GM12878 (cell line): ENCODE measurements at regions of chr3 and their contacts with region 1.

Region 1: DNA sequence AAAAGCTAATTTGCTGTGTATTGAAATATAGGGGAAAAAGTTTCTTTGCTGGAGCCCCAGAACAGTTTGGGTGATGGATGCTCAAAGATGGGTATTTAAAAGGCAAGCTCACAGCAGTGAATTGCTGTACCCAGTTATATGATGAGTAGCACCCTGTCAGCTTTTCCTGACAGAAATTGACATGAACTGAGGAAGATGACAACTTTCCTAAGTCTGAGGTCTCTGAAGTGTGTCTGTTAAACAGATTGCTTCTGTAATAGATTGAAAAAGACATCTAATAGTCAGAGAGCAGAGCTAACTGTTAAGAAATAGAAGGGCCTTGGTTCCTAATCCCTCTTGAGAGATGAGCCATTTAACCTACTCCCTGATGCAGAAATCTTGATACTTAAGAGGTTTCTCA is 1278.0 kb upstream of the ALCAM start:
- DNase-seq: no peak
- ATAC-seq: no peak
- H3K4me3 ChIP-seq: no peak overlapping the region
- H3K27ac ChIP-seq: no peak overlapping the region
- H3K4me1 ChIP-seq: no peaks in the 10 kb centered on the region
- H3K27me3 ChIP-seq: no peaks in the 10 kb centered on the region
- CTCF ChIP-seq: no peak
- EP300 ChIP-seq: no peak
- POLR2A ChIP-seq: no peak
- RAD21 ChIP-seq: no peak

Region 2: GRCh38 chr3:104102386-104102785 is 13.6 kb after region 1 on chr3:
- CTCF ChIA-PET with region 1: interaction called, 10 read pairs
- POLR2A ChIA-PET with region 1: no interaction called
- RAD21 ChIA-PET with region 1: no interaction called
- SMC1A ChIA-PET with region 1: no interaction called
- in situ Hi-C with region 1: no loop called
- intact Hi-C with region 1: no loop called
- DNase-seq: peak; percentile 23
- ATAC-seq: peak; percentile 95
- H3K4me3 ChIP-seq: no peak overlapping the region
- H3K27ac ChIP-seq: no peak overlapping the region
- H3K4me1 ChIP-seq: no peaks in the 10 kb centered on the region
- H3K27me3 ChIP-seq: no peaks in the 10 kb centered on the region
- CTCF ChIP-seq: peak; percentile 66 to 75 (median 73)
- EP300 ChIP-seq: no peak
- POLR2A ChIP-seq: no peak
- RAD21 ChIP-seq: peak; percentile 61